ENCODE measurements at regions of chr4 and their contacts with region 1.

Region 1: GRCh38 chr4:169619959-169620879 is at the start of gene CLCN3:
- DNase-seq: peak; percentile 80
- H3K4me3 ChIP-seq: peak within 1 kb of the TSS; percentile 51 to 79 (median 71)
- H3K27ac ChIP-seq: peak within 1 kb of the TSS; percentile 92 to 99 (median 96)
- H3K4me1 ChIP-seq: peaks cover 0 to 45% (median 13%) of the 10 kb centered on the region in 3 donors
- H3K27me3 ChIP-seq: no peaks in the 10 kb centered on the region
- CTCF ChIP-seq: peak in 3 of 6 experiments; percentile 10 to 35 (median 23)
- POLR2A ChIP-seq: peak in 3 of 4 donors; percentile 79 to 95 (median 90)
- total RNA-seq, gene CLCN3: 31.3 to 66.3 (median 46.1) TPM

Region 2: DNA sequence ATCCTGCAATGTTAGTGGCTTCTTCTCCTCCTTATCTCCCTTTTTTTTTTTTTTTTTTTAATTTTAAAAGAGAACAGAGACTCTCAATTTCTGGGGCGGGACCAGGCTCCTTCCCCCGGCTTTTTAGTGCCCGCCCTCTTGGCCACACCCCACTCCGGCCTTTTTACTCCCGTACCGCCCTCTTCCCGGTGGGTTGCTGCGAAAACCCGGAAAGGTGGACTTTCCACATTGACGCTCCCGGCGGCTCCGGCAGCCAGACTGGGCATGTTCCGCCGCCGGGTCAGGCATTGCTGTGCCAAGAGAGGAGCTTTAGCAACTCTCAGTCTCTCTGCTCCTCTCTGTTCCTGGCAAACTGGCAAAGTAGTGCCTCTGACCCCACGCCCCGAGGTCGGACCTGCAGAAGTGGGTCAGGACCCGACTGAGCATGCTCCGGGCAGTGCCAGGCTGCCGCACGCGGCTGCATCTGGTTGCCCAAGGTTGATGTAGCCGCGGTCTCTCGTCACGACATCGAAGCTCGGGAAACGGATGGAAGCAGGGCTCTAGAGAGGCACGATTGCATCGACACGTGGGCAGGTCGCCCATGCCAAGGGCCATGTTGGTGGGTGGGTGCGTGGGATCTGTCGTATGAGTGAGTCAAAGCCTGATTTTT is 407.1 kb after region 1 on chr4:
- intact Hi-C with region 1: loop called (anchors 10 kb)
- DNase-seq: peak; percentile 42
- H3K4me3 ChIP-seq: peak overlapping the region; percentile 77 to 90 (median 82)
- H3K27ac ChIP-seq: peak overlapping the region; percentile 73 to 91 (median 88)
- H3K4me1 ChIP-seq: peaks cover 3 to 15% (median 5%) of the 10 kb centered on the region in 3 donors
- H3K27me3 ChIP-seq: peaks cover 0 to 38% (median 0%) of the 10 kb centered on the region in 4 donors
- CTCF ChIP-seq: peak in 2 of 6 experiments; percentile 14 to 18
- POLR2A ChIP-seq: peak in 1 of 4 donors; percentile 37

Measured in esophagus squamous epithelium (tissue), 5 donors.